Naive thymus-derived CD4-positive, alpha-beta T cell (primary cell): ENCODE measurements at regions of chr9 and their contacts with region 1.

Region 1: DNA sequence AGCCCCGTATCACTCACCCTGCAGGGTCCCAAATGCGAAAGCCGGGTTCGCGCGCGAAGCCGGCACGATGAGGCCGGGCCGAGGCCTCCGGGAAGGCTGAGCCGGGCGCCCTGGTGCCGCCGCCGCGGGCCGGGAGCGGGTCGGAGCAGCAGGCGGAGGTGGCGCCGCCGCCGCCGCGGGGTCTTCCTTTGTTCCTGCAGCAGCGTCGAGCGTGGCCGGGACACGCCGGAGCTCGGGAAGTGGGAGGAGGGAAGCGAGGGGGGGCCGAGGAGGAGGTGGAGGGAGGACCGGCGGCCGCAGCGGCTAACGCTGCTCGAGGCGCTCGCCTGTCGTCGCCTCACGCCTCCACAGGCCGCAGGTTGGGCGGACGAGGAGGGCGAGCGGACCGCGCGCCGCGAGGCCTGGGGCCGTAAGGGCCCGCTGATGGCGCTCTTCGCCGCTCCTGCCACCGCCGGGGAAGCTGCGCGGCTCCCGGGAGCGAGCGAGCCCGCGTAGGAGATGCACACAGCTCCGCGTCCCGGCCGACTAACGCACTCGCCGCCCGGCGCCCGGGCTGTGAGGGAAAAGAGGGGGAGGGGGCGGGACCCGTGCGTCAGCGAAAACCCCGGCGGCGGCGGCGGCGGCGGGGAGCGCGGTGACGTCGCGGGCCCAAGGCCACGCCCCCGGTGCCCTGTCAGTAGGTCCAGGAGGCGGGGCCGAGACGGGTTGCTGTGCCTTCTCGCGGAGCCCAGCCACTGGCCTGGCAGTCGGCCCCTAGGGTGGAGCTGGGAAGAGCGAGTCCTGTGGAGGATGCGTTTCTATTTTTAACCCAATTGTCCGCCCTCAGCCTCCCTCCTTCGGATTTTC is at the start of gene ZFAND5:
- DNase-seq: peak; percentile 88 to 93 (median 90)
- ATAC-seq: peak; percentile 90
- H3K4me3 ChIP-seq: peak within 1 kb of the TSS; percentile 89
- H3K4me3 Mint-ChIP-seq: peak within 1 kb of the TSS; percentile 91 to 99 (median 96)
- H3K27ac ChIP-seq: peak within 1 kb of the TSS; percentile 94
- H3K27ac Mint-ChIP-seq: peak within 1 kb of the TSS; percentile 97 to 99 (median 99)
- H3K4me1 ChIP-seq: peaks cover 24 to 30% of the 10 kb centered on the region in 2 donors
- H3K4me1 Mint-ChIP-seq: peaks cover 16 to 47% (median 44%) of the 10 kb centered on the region in 7 donors
- H3K27me3 ChIP-seq: no peaks in the 10 kb centered on the region
- H3K27me3 Mint-ChIP-seq: no peaks in the 10 kb centered on the region
- total RNA-seq, gene ZFAND5: 82.4 to 466 (median 155) TPM

Region 2: GRCh38 chr9:70419546-70420266 is 1945.2 kb before region 1 on chr9:
- CTCF ChIA-PET with region 1: no interaction called
- POLR2A ChIA-PET with region 1: interaction called, 7 read pairs
- intact Hi-C with region 1: loop called (anchors 1 to 5 kb)
- DNase-seq: peak; percentile 69 to 92 (median 83)
- ATAC-seq: peak; percentile 69
- H3K4me3 ChIP-seq: peak overlapping the region; percentile 69
- H3K4me3 Mint-ChIP-seq: peak overlapping the region; percentile 87 to 99 (median 95)
- H3K27ac ChIP-seq: peak overlapping the region; percentile 92
- H3K27ac Mint-ChIP-seq: peak overlapping the region; percentile 75 to 100 (median 99)
- H3K4me1 ChIP-seq: peaks cover 38 to 43% of the 10 kb centered on the region in 2 donors
- H3K4me1 Mint-ChIP-seq: peaks cover 22 to 66% (median 42%) of the 10 kb centered on the region in 7 donors
- H3K27me3 ChIP-seq: no peaks in the 10 kb centered on the region
- H3K27me3 Mint-ChIP-seq: peaks cover 0 to 2% (median 0%) of the 10 kb centered on the region in 5 donors

Region 3: DNA sequence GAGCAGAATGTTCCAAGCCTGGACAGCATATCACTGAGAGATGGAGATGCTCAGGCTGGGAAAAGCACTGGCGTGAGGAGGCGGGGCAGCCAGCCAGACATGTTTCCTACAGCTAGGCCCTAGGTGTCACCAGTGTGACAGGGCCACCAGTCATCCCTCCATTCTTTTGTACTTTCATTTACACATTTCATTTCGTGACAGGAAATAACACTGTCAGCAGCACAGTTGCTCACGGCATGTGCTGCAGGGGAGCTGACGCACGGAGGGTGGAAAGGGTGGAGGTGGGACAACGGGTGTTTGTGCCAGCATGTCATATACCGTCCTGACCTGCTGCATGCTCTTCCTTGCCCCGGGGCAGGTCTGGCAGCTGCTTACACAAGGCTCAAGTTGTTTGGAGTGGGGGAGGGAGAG is 581.8 kb before region 1 on chr9:
- CTCF ChIA-PET with region 1: no interaction called
- POLR2A ChIA-PET with region 1: interaction called, 3 read pairs
- intact Hi-C with region 1: loop called (anchors 2 to 5 kb)
- DNase-seq: peak; percentile 60 to 93 (median 90)
- ATAC-seq: peak; percentile 98
- H3K4me3 ChIP-seq: peak overlapping the region; percentile 18
- H3K4me3 Mint-ChIP-seq: peak overlapping the region; percentile 62 to 82 (median 76)
- H3K27ac ChIP-seq: peak overlapping the region; percentile 85
- H3K27ac Mint-ChIP-seq: peak overlapping the region; percentile 94 to 100 (median 99)
- H3K4me1 ChIP-seq: peaks cover 38% of the 10 kb centered on the region in 2 donors
- H3K4me1 Mint-ChIP-seq: peaks cover 20 to 58% (median 53%) of the 10 kb centered on the region in 7 donors
- H3K27me3 ChIP-seq: no peaks in the 10 kb centered on the region
- H3K27me3 Mint-ChIP-seq: no peaks in the 10 kb centered on the region

Region 4: DNA sequence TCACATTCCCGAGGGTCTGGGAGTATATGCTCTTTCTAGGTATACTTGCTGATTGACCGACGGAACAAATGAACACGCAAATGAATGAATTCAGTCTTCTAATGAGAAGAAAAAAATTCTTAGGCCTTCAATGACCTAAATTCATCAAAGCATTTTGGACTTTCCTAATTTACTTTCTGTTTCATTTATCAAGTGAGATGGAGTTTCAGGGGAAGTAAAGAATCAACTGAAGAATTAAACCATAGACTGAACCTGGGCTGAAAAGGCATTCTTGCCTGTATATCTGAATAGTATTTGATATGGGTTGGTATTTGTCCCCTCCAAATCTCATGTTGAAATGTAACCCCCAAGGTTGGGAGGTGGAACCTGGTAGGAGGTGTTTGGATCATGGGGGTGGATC is 64.0 kb before region 1 on chr9:
- CTCF ChIA-PET with region 1: no interaction called
- POLR2A ChIA-PET with region 1: no interaction called
- intact Hi-C with region 1: loop called in 1 of 2 experiments (anchors 5 kb)
- DNase-seq: no peak
- ATAC-seq: no peak
- H3K4me3 ChIP-seq: no peak overlapping the region
- H3K4me3 Mint-ChIP-seq: no peak overlapping the region
- H3K27ac ChIP-seq: no peak overlapping the region
- H3K27ac Mint-ChIP-seq: peak overlapping the region in 1 of 9 donors; percentile 36
- H3K4me1 ChIP-seq: peaks cover 0 to 4% of the 10 kb centered on the region in 2 donors
- H3K4me1 Mint-ChIP-seq: peaks cover 10 to 29% (median 16%) of the 10 kb centered on the region in 7 donors
- H3K27me3 ChIP-seq: no peaks in the 10 kb centered on the region
- H3K27me3 Mint-ChIP-seq: peaks cover 0 to 2% (median 0%) of the 10 kb centered on the region in 5 donors

Region 5: GRCh38 chr9:72322259-72322658 is 42.6 kb before region 1 on chr9:
- CTCF ChIA-PET with region 1: no interaction called
- POLR2A ChIA-PET with region 1: no interaction called
- intact Hi-C with region 1: no loop called
- DNase-seq: no peak
- ATAC-seq: no peak
- H3K4me3 ChIP-seq: no peak overlapping the region
- H3K4me3 Mint-ChIP-seq: no peak overlapping the region
- H3K27ac ChIP-seq: no peak overlapping the region
- H3K27ac Mint-ChIP-seq: no peak overlapping the region
- H3K4me1 ChIP-seq: no peaks in the 10 kb centered on the region
- H3K4me1 Mint-ChIP-seq: no peaks in the 10 kb centered on the region
- H3K27me3 ChIP-seq: no peaks in the 10 kb centered on the region
- H3K27me3 Mint-ChIP-seq: peaks cover 0 to 21% (median 0%) of the 10 kb centered on the region in 5 donors

Region 6: GRCh38 chr9:72349240-72349639 is 15.7 kb before region 1 on chr9:
- CTCF ChIA-PET with region 1: no interaction called
- POLR2A ChIA-PET with region 1: no interaction called
- intact Hi-C with region 1: no loop called
- DNase-seq: no peak
- ATAC-seq: no peak
- H3K4me3 ChIP-seq: no peak overlapping the region
- H3K4me3 Mint-ChIP-seq: no peak overlapping the region
- H3K27ac ChIP-seq: no peak overlapping the region
- H3K27ac Mint-ChIP-seq: peak overlapping the region in 1 of 9 donors; percentile 26
- H3K4me1 ChIP-seq: no peaks in the 10 kb centered on the region
- H3K4me1 Mint-ChIP-seq: peaks cover 0 to 7% (median 0%) of the 10 kb centered on the region in 7 donors
- H3K27me3 ChIP-seq: no peaks in the 10 kb centered on the region
- H3K27me3 Mint-ChIP-seq: peaks cover 0 to 4% (median 0%) of the 10 kb centered on the region in 5 donors

Region 7: DNA sequence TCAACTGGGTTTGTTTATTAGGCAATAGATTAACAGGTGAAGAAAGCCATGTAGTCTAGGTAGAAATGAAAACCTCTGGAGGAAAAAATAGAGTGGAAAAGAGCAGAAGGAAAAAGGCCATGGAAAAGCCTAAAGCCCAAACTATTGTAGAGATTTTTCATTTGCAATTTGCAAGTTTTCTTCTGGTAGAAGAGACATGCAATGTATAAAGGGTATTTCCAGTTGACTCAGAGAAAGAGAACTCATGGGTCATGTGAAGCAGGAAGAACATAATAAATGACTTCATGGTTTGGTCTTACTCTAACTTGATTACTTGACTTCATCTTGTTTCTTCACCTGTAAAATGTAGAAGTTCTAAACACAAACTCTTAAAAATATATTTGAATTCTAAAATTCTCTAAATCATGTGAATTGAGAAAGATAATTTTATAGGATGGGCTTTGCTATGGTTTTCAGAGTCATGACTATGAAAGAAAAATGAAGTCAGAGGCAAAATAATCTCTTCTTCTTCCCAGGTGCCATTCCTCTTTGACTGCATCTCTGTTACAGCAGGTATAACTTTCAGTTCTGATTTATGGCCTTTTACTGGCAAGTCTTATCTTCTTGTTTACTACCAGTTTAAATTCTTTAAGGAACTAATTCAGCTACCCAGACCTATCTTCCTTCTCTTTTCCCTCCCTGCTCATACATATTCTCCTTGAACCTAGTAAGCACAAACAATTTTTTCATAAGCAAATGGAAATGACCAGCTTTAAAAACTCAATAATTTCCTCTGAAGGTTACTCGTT is 108.8 kb after region 1 on chr9:
- CTCF ChIA-PET with region 1: no interaction called
- POLR2A ChIA-PET with region 1: interaction called, 5 read pairs
- intact Hi-C with region 1: loop called (anchors 2 kb)
- DNase-seq: no peak
- ATAC-seq: peak; percentile 62
- H3K4me3 ChIP-seq: no peak overlapping the region
- H3K4me3 Mint-ChIP-seq: peak overlapping the region in 1 of 10 donors; percentile 62
- H3K27ac ChIP-seq: no peak overlapping the region
- H3K27ac Mint-ChIP-seq: peak overlapping the region in 4 of 9 donors; percentile 63 to 88 (median 78)
- H3K4me1 ChIP-seq: peaks cover 0 to 6% of the 10 kb centered on the region in 2 donors
- H3K4me1 Mint-ChIP-seq: peaks cover 8 to 47% (median 13%) of the 10 kb centered on the region in 7 donors
- H3K27me3 ChIP-seq: no peaks in the 10 kb centered on the region
- H3K27me3 Mint-ChIP-seq: peaks cover 0 to 4% (median 0%) of the 10 kb centered on the region in 5 donors

Region 8: DNA sequence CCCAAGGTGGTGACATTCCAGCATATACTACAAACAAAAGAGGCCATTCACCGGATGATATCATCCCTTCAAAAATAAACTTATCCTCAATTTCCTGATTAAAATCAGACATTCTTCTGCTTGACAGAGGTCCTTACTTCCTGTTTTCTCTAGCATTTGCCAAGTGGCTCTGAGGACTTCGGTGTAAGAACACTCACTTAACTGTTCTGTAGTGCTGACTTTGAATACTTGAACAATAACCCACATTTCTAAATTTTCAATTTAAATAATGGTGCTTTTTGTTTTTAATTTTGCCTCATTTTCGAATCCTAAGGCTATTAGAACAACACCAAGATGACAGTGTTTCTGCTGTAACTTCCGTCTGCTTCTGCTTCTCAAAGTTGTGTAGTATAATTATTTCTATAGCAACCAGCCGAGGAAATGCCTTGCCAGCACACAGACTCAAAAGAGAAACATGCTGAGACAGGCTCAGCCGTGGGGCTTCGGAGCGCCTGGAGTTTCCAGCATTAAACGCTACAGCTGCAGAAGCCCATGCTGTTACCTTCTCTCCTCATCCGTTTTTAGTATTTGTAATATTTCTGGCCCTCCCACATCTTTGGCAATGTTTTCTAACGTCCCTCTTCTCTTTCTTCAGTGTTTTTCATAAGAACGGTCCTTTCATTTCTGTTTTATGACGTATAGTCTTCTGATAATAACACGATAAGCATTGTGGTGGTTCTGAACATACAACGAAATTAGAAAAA is 767.3 kb after region 1 on chr9:
- CTCF ChIA-PET with region 1: no interaction called
- POLR2A ChIA-PET with region 1: interaction called, 4 read pairs
- intact Hi-C with region 1: loop called (anchors 1 kb)
- DNase-seq: peak; percentile 51 to 91 (median 85)
- ATAC-seq: peak; percentile 97
- H3K4me3 ChIP-seq: peak overlapping the region; percentile 78
- H3K4me3 Mint-ChIP-seq: peak overlapping the region; percentile 74 to 97 (median 90)
- H3K27ac ChIP-seq: peak overlapping the region; percentile 90
- H3K27ac Mint-ChIP-seq: peak overlapping the region; percentile 93 to 99 (median 95)
- H3K4me1 ChIP-seq: peaks cover 9% of the 10 kb centered on the region in 2 donors
- H3K4me1 Mint-ChIP-seq: peaks cover 20 to 47% (median 37%) of the 10 kb centered on the region in 7 donors
- H3K27me3 ChIP-seq: no peaks in the 10 kb centered on the region
- H3K27me3 Mint-ChIP-seq: no peaks in the 10 kb centered on the region